Spleen (tissue), 13 donors: ENCODE measurements at regions of chr14 and their contacts with region 1.

Region 1: DNA sequence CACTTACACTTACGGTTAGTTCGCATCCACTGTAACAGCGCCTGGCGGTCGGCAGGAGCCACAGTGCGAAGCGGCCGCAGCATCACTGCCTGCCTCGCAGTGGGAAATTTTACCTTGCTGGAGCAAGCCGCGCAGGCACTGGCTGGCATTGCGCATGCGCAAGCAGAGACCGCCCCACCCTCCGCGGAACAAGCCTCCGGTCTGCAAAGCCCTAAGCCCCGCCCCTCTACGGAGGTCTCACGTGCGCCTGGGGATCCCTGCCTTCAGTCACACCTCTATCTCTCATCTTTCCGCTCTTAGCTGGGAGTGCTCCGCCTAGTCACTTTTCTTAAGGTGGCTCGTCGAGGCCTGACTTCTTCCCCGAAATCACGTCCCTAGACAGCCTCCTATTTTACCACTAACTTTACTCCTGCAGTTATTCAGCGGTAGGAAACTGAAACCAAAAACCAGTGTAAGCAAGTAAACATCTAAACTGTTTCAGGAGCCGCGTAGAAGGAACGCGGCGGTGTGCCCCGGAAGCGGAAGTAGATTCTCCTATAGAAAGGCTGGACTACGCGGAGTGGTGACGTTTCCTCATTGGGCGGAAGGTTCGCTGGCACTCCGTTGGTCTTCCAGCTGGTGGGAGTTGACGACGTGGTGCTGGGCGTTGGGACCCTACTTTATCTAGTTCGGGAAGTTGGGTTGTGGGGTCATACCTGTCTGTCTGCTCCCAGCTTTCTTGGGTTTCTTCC is at the start of gene SRP54:
- DNase-seq: peak; percentile 100
- H3K4me3 ChIP-seq: peak within 1 kb of the TSS; percentile 67 to 91 (median 74)
- H3K27ac ChIP-seq: peak within 1 kb of the TSS; percentile 91 to 99 (median 98)
- H3K4me1 ChIP-seq: peaks cover 23 to 61% (median 54%) of the 10 kb centered on the region in 6 donors
- H3K27me3 ChIP-seq: no peaks in the 10 kb centered on the region
- CTCF ChIP-seq: peak in 9 of 11 experiments; percentile 12 to 51 (median 21)
- POLR2A ChIP-seq: peak; percentile 86 to 97 (median 92)
- total RNA-seq, gene SRP54: 47.1 to 65.0 (median 50.6) TPM

Region 2: DNA sequence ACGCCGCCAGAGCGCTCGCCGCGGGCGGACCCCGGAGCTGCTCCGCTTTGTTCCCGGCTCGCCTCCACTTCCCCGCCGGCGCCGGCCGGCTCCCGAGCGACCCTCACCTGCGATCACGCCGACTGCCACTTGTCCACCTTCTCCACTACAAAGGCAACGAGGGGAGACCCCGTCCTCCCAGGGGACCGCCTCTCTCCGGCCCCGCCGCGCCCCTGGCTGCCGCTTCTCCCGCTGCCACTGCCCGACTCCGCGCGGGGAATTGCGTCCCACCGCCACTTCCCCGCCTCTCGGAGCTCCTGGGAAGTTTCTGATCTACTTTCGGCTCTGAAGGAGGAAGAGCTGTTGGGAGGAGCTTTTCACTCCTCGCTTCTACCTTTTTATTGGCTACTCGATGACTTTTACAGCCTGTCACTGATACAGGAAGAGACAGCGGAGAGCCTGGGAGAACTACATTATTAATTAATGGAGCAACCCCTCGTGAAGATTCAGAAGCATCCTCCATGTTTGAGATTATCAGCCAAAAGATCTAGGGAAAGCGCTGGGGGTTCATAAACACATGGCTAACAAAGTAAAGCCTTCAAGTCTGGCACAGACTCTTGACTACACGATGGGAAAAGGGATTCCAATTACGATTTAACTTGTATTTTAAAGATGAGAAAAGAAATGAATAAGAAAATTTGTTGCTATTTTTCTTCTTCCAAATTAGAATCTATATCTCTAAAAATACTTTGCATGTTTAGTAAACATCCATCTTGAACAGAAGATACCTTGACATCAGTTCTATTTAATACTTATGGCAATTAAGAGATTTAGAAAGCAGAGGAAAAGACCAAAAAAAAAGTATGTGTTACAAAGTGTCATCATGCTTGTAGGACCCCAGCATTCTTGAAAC is 107.3 kb before region 1 on chr14 and contains the start of gene BAZ1A:
- intact Hi-C with region 1: loop called (anchors 5 kb)
- DNase-seq: peak; percentile 92
- H3K4me3 ChIP-seq: peak within 1 kb of the TSS; percentile 62 to 97 (median 93)
- H3K27ac ChIP-seq: peak within 1 kb of the TSS; percentile 95 to 100 (median 99)
- H3K4me1 ChIP-seq: peaks cover 12 to 42% (median 34%) of the 10 kb centered on the region in 6 donors
- H3K27me3 ChIP-seq: no peaks in the 10 kb centered on the region
- CTCF ChIP-seq: peak in 6 of 11 experiments; percentile 17 to 48 (median 30)
- POLR2A ChIP-seq: peak in 2 of 3 donors; percentile 15 to 85
- total RNA-seq, gene BAZ1A: 58.1 to 126 (median 89.0) TPM

Region 3: DNA sequence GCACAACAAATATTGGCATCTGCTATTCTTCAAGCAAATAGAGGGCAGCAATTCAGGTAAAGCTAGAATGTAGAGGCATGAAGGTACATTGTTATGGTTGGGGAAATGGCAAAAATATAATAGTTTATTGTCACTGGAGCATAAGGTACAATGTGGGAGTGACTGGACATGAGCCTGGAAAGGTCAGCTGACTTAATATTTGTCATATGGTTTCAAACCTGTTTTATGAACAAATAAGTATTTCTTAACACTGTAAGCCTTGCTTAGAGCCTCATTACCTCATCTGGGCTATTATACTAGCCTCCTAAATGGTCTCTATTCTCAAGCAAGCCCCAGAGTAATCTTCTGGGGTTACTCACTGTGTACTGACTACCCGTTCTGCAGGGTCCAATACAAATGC is 97.2 kb after region 1 on chr14:
- intact Hi-C with region 1: no loop called
- DNase-seq: no peak
- H3K4me3 ChIP-seq: no peak overlapping the region
- H3K27ac ChIP-seq: no peak overlapping the region
- H3K4me1 ChIP-seq: no peaks in the 10 kb centered on the region
- H3K27me3 ChIP-seq: no peaks in the 10 kb centered on the region
- CTCF ChIP-seq: no peak
- POLR2A ChIP-seq: no peak

Region 4: DNA sequence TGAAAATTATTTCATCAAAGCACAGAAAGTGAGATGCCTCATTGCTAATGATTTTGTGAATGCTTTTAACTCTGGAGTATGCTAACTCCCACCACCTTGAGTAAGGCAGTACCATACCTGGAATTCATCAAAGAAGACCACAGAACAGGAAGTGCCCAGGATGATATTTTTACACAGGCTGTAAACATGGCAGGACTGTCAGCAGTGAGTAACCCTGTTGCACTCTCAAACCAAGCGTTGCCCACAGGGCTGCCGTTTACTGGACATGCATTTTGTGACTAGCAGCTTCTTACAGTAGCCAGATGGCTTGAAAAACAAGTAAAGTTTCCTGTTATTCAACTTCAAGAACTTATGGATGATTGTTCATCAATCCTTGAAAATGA is 784.1 kb after region 1 on chr14:
- intact Hi-C with region 1: no loop called
- DNase-seq: no peak
- H3K4me3 ChIP-seq: no peak overlapping the region
- H3K27ac ChIP-seq: no peak overlapping the region
- H3K4me1 ChIP-seq: no peaks in the 10 kb centered on the region
- H3K27me3 ChIP-seq: no peaks in the 10 kb centered on the region
- CTCF ChIP-seq: no peak
- POLR2A ChIP-seq: no peak